ENCODE measurements at regions of chr15 and their contacts with region 1.

Region 1: DNA sequence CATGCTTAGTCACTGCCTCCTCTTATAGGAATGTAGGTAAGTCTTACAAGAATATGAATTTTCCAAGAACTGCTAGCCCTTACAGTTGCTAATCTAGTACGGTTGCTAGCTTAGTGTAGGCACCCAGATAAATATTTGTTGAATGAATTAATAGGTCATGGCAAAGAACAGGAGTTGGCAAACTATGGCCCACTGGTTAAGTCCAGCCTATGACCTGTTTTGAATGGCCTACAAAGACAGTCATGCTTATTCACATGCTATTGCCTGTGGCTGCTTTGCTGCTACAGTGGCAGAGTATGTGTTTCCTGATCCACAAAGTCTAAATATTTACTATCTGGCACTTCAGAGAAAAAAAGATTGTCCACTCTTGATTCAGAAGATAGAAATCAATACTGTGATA is 631.8 kb downstream of the AGBL1 start:
- DNase-seq: no peak
- ATAC-seq: no peak
- H3K4me3 ChIP-seq: no peak overlapping the region
- H3K27ac ChIP-seq: no peak overlapping the region
- H3K4me1 ChIP-seq: no peaks in the 10 kb centered on the region
- H3K27me3 ChIP-seq: no peaks in the 10 kb centered on the region
- CTCF ChIP-seq: no peak
- POLR2A ChIP-seq: no peak

Region 2: DNA sequence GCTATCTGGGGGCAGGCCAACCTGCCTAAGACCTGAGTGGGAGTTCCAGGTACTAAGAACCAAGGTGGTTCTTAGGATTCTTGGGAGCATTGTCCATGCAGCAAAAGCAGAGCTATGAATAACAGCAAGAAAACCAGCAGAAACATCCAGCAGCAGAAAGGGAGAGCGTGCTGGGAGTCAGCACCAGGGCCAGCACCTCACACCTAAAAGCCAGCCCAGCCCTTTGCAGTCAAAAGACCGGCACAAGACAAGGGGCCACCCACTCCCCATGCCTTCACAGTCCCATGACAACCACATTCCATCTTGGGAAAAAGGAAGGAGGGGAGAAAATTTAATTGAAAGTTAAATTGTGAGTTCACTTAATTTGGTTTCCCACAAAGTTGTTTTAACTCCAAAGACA is 266.9 kb before region 1 on chr15:
- intact Hi-C with region 1: no loop called
- DNase-seq: peak in 1 of 5 donors; percentile 28
- ATAC-seq: no peak
- H3K4me3 ChIP-seq: no peak overlapping the region
- H3K27ac ChIP-seq: no peak overlapping the region
- H3K4me1 ChIP-seq: no peaks in the 10 kb centered on the region
- H3K27me3 ChIP-seq: no peaks in the 10 kb centered on the region
- CTCF ChIP-seq: no peak
- POLR2A ChIP-seq: no peak

Region 3: GRCh38 chr15:86483936-86484335 is 227.5 kb before region 1 on chr15:
- intact Hi-C with region 1: no loop called
- DNase-seq: no peak
- ATAC-seq: no peak
- H3K4me3 ChIP-seq: no peak overlapping the region
- H3K27ac ChIP-seq: no peak overlapping the region
- H3K4me1 ChIP-seq: no peaks in the 10 kb centered on the region
- H3K27me3 ChIP-seq: no peaks in the 10 kb centered on the region
- CTCF ChIP-seq: no peak
- POLR2A ChIP-seq: no peak

Region 4: DNA sequence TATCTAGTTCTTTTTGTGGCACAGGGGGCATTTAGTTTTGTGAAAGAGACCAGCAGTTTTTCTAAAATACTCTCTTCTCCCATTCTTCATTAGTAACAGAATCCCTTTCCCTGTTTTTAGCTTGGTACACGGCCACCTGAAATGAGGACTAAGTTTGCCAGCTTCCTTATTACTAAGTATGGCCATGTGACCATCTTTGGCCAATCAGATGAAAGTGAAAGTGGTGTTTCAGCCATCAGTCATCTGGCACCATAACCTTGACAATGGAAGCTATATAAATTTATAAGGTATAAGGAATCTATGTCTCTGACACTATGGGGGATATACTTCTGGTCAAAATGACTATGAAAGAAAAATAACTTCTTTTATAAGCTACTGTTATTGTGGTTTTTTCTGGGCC is 61.4 kb before region 1 on chr15:
- intact Hi-C with region 1: no loop called
- DNase-seq: no peak
- ATAC-seq: no peak
- H3K4me3 ChIP-seq: no peak overlapping the region
- H3K27ac ChIP-seq: no peak overlapping the region
- H3K4me1 ChIP-seq: no peaks in the 10 kb centered on the region
- H3K27me3 ChIP-seq: no peaks in the 10 kb centered on the region
- CTCF ChIP-seq: no peak
- POLR2A ChIP-seq: no peak

Region 5: DNA sequence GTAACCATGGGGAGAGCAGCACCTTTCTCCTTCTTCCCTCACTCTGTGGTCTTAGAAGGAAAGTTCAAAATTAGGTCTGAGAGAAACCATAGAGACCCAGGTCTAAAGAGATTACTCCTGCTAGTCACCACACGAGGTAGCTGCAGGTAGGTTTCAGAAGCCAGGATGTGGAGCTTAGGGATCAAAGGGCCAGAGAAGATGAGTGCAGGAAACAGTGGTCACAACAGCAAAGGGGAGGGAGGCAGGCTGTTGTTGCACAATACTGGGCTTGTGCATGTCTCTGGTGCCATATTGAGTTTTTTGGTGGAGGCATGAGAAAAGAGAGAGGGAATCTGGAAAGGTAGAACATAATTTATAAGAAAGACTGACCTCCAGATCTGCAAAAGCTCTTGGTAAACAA is 48.1 kb before region 1 on chr15:
- intact Hi-C with region 1: loop called in 1 of 10 experiments (anchors 5 kb)
- DNase-seq: no peak
- ATAC-seq: no peak
- H3K4me3 ChIP-seq: no peak overlapping the region
- H3K27ac ChIP-seq: no peak overlapping the region
- H3K4me1 ChIP-seq: no peaks in the 10 kb centered on the region
- H3K27me3 ChIP-seq: peaks cover 0 to 8% (median 0%) of the 10 kb centered on the region in 9 donors
- CTCF ChIP-seq: no peak
- POLR2A ChIP-seq: no peak

Region 6: GRCh38 chr15:86829245-86829644 is 117.8 kb after region 1 on chr15:
- intact Hi-C with region 1: loop called in 1 of 10 experiments (anchors 5 kb)
- DNase-seq: no peak
- ATAC-seq: no peak
- H3K4me3 ChIP-seq: no peak overlapping the region
- H3K27ac ChIP-seq: no peak overlapping the region
- H3K4me1 ChIP-seq: peaks cover 0 to 12% (median 5%) of the 10 kb centered on the region in 12 donors
- H3K27me3 ChIP-seq: no peaks in the 10 kb centered on the region
- CTCF ChIP-seq: no peak
- POLR2A ChIP-seq: no peak

Measured in heart left ventricle (tissue), 16 donors.